ENCODE measurements at regions of chr3 and their contacts with region 1.

Region 1: DNA sequence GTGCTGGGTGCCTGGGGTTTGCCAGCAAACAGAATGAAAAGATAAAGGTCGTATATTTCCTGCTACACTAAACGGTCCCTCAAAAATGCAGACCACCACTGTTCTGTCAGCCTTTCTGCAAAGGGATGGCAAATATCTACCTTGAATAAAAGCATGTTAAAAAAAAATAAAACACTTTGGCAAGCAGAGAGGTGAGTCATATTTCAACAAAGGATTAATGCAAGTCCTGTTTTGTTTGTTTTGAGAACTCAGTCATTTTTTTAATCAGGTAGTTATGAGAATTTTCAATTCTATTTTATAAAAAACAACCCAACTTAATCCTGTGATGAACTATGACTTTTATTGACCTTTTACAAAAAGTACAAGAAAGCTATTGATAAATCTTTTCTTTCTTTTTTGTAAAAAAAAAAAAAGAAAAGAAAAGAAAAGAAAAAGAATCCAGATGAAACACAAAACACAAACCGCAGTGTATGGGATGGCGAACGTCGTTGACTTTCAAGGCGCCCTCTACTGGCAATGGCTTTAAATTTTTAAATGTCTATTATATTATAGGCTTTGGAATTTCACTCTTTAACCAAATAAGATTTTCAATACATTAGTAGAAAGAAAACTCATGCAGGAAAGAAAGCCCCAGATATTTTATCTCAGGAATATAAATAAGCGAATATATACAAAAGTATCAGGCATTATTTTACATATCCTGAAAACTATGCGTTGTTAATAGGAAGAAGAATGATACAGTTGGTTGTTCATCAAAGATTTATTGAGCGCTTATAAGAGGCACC is 87.8 kb downstream of the NCEH1 start:
- DNase-seq: peak; percentile 66
- H3K4me3 ChIP-seq: peak overlapping the region in 1 of 3 experiments; percentile 8
- H3K27ac ChIP-seq: peak overlapping the region; percentile 22
- H3K4me1 ChIP-seq: peaks cover 20% of the 10 kb centered on the region
- H3K27me3 ChIP-seq: no peaks in the 10 kb centered on the region
- CTCF ChIP-seq: peak; percentile 66 to 71

Region 2: DNA sequence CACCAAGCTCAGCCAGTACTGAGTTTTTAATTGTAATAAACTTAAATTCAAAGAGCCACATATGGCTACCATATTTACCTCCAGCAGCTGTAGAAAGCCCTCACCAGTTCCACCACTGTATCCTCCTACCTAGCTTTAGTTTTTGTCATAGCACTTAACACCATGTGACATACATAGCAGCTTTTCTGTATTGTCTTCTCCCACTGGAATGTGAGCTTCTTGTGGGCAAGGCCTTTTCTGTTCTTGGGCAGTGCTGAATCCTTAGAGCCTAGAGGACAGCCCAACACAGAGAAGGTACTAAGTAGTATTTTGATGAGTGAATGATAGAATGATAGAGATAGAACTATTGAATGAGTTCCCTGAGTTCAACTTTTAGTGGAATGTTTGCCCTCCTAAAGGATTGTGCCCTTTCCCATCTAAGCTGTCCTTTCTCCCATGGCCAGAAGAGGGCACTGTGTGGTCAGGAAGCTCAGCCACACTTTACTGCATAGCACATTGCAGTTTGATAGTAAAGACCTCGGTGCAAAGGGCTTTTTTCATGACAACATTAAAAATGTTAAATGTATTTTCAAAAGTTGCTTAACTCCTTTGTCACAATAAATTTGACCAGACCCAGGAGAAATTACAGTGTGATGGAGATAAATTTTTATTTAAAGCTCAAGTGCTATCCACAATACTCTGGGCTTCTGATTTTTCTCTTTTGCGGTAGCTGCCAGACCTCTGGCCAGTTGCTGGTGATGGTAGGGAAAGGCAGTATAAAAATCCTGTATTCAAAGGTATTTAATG is 290.7 kb before region 1 on chr3:
- CTCF ChIA-PET with region 1: no interaction called
- dilution Hi-C with region 1: no loop called
- in situ Hi-C with region 1: no loop called
- intact Hi-C with region 1: loop called (anchors 5 kb)
- DNase-seq: peak; percentile 50
- H3K4me3 ChIP-seq: no peak overlapping the region
- H3K27ac ChIP-seq: no peak overlapping the region
- H3K4me1 ChIP-seq: peaks cover 8% of the 10 kb centered on the region
- H3K27me3 ChIP-seq: no peaks in the 10 kb centered on the region
- CTCF ChIP-seq: peak; percentile 89 to 97

Region 3: DNA sequence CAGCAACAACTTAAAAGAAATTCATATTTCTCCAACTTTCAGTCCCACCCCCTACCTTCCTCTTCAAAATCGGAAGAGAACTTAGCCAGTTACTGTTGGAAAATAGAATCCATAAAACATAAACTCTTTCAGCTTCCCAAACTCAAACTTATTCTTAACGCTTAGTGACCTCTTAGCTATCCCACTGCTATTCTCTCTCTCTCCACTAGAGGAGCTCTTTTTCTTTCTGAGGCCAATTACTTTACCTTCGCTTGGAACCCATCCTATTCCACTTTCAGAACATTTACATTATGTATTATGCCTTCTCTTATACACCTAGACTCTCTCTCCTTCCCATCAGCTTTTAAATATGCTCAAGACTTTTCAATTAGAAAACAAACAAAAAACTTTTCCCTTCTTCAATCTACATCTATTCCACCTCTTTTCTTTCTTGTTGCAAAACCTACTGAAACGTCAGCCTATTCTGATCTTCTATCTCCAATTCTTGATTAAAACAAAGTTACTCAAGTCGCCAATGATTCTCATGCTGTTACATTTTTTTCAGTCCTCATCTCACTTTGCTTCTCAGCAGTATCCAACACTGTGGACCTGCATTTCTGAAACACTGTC is 161.5 kb before region 1 on chr3:
- CTCF ChIA-PET with region 1: interaction called, 11 read pairs
- dilution Hi-C with region 1: no loop called
- in situ Hi-C with region 1: no loop called
- intact Hi-C with region 1: no loop called
- DNase-seq: peak; percentile 36
- H3K4me3 ChIP-seq: no peak overlapping the region
- H3K27ac ChIP-seq: no peak overlapping the region
- H3K4me1 ChIP-seq: no peaks in the 10 kb centered on the region
- H3K27me3 ChIP-seq: no peaks in the 10 kb centered on the region
- CTCF ChIP-seq: peak; percentile 92 to 97